ENCODE measurements at regions of chr3 and their contacts with region 1.

Region 1: GRCh38 chr3:190424478-190425439 is 24.9 kb downstream of the TMEM207 start:
- DNase-seq: peak; percentile 78
- ATAC-seq: peak; percentile 82
- H3K4me3 ChIP-seq: no peak overlapping the region
- H3K27ac ChIP-seq: no peak overlapping the region
- H3K4me1 ChIP-seq: no peaks in the 10 kb centered on the region
- H3K27me3 ChIP-seq: no peaks in the 10 kb centered on the region
- CTCF ChIP-seq: peak; percentile 81

Region 2: GRCh38 chr3:189961525-189962161 is 463.1 kb before region 1 on chr3:
- CTCF ChIA-PET with region 1: no interaction called
- POLR2A ChIA-PET with region 1: no interaction called
- intact Hi-C with region 1: loop called (anchors 1 kb)
- DNase-seq: peak; percentile 95
- ATAC-seq: peak; percentile 82
- H3K4me3 ChIP-seq: no peak overlapping the region
- H3K27ac ChIP-seq: no peak overlapping the region
- H3K4me1 ChIP-seq: peaks cover 4% of the 10 kb centered on the region; the same call in 1 of the 2 replicates
- H3K27me3 ChIP-seq: no peaks in the 10 kb centered on the region
- CTCF ChIP-seq: peak; percentile 95

Region 3: GRCh38 chr3:190224863-190225692 is 199.7 kb before region 1 on chr3:
- CTCF ChIA-PET with region 1: interaction called, 3 read pairs
- POLR2A ChIA-PET with region 1: no interaction called
- intact Hi-C with region 1: loop called (anchors 1 kb)
- DNase-seq: peak; percentile 78
- ATAC-seq: peak; percentile 73
- H3K4me3 ChIP-seq: no peak overlapping the region
- H3K27ac ChIP-seq: no peak overlapping the region
- H3K4me1 ChIP-seq: peaks cover 11% of the 10 kb centered on the region
- H3K27me3 ChIP-seq: no peaks in the 10 kb centered on the region
- CTCF ChIP-seq: peak; percentile 72

Region 4: DNA sequence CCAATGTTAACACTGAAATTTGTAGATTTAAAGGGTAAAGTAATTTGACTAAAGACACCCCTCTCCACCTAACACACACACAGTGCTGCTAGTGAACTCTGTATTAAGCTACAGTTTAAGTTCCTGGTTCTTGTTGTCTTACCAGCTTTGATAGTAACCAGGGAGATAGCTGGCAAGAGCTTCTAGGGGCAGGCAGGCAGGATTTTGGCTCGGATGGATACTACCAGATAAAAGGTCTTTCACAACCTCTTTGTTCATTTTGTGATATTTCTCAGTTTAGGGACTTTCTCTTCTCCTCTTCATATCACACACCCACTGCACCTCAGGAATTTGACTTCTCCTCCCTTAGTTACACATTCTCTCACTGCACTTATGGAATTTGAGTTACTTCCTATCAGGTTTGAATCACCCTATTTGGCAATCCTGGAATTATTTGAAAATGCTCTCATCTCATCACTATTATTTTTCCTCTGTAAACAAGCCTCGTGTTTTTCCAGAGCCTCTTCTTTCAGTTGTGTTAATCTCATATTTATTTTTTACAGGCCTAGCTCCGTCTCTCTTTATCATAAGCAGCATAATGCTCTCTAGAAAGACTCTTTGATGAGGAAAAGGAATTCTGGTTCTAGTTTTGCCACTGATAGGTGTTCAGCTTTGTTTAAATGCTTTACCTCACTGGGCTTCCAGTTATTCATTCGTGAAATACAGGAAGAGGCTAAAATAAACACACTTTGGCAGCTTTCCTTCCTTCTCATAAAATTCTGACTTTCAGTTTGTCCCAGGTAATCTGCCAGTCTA is 79.5 kb before region 1 on chr3:
- CTCF ChIA-PET with region 1: interaction called, 7 read pairs
- POLR2A ChIA-PET with region 1: no interaction called
- intact Hi-C with region 1: loop called (anchors 1 kb)
- DNase-seq: peak; percentile 95
- ATAC-seq: peak; percentile 90
- H3K4me3 ChIP-seq: peak overlapping the region; percentile 65
- H3K27ac ChIP-seq: peak overlapping the region; percentile 94
- H3K4me1 ChIP-seq: peaks cover 28% of the 10 kb centered on the region
- H3K27me3 ChIP-seq: no peaks in the 10 kb centered on the region
- CTCF ChIP-seq: no peak

Region 5: GRCh38 chr3:190401963-190402362 is 22.8 kb before region 1 on chr3:
- CTCF ChIA-PET with region 1: interaction called, 4 read pairs
- POLR2A ChIA-PET with region 1: interaction called, 11 read pairs
- intact Hi-C with region 1: no loop called
- DNase-seq: no peak
- ATAC-seq: no peak
- H3K4me3 ChIP-seq: no peak overlapping the region
- H3K27ac ChIP-seq: no peak overlapping the region
- H3K4me1 ChIP-seq: no peaks in the 10 kb centered on the region
- H3K27me3 ChIP-seq: no peaks in the 10 kb centered on the region
- CTCF ChIP-seq: no peak

Region 6: GRCh38 chr3:191220908-191221307 is 796.1 kb after region 1 on chr3:
- CTCF ChIA-PET with region 1: no interaction called
- POLR2A ChIA-PET with region 1: no interaction called
- intact Hi-C with region 1: no loop called
- DNase-seq: peak; percentile 45
- ATAC-seq: no peak
- H3K4me3 ChIP-seq: no peak overlapping the region
- H3K27ac ChIP-seq: no peak overlapping the region
- H3K4me1 ChIP-seq: no peaks in the 10 kb centered on the region
- H3K27me3 ChIP-seq: no peaks in the 10 kb centered on the region
- CTCF ChIP-seq: peak; percentile 42; the same call in 1 of the 2 replicates

Measured in PC-3 (cell line).